Calu3 (cell line): ENCODE measurements at regions of chr10 and their contacts with region 1.

Region 1: GRCh38 chr10:30534465-30535144 is 94.9 kb downstream of the LYZL2 start:
- DNase-seq: peak; percentile 67
- H3K4me3 Mint-ChIP-seq: no peak overlapping the region
- H3K27ac Mint-ChIP-seq: no peak overlapping the region
- H3K4me1 Mint-ChIP-seq: peaks cover 28% of the 10 kb centered on the region
- H3K27me3 Mint-ChIP-seq: no peaks in the 10 kb centered on the region
- CTCF ChIP-seq: peak; percentile 85

Region 2: GRCh38 chr10:30392564-30392990 is 142.0 kb before region 1 on chr10:
- CTCF ChIA-PET with region 1: no interaction called
- intact Hi-C with region 1: loop called (anchors 2 kb)
- DNase-seq: peak; percentile 85
- H3K4me3 Mint-ChIP-seq: peak overlapping the region; percentile 34
- H3K27ac Mint-ChIP-seq: no peak overlapping the region
- H3K4me1 Mint-ChIP-seq: peaks cover 11% of the 10 kb centered on the region
- H3K27me3 Mint-ChIP-seq: no peaks in the 10 kb centered on the region
- CTCF ChIP-seq: peak; percentile 85

Region 3: GRCh38 chr10:30413996-30414576 is 120.5 kb before region 1 on chr10:
- CTCF ChIA-PET with region 1: interaction called, 3 read pairs
- intact Hi-C with region 1: loop called (anchors 1 kb)
- DNase-seq: peak; percentile 51
- H3K4me3 Mint-ChIP-seq: no peak overlapping the region
- H3K27ac Mint-ChIP-seq: no peak overlapping the region
- H3K4me1 Mint-ChIP-seq: peaks cover 16% of the 10 kb centered on the region
- H3K27me3 Mint-ChIP-seq: no peaks in the 10 kb centered on the region
- CTCF ChIP-seq: peak; percentile 71

Region 4: DNA sequence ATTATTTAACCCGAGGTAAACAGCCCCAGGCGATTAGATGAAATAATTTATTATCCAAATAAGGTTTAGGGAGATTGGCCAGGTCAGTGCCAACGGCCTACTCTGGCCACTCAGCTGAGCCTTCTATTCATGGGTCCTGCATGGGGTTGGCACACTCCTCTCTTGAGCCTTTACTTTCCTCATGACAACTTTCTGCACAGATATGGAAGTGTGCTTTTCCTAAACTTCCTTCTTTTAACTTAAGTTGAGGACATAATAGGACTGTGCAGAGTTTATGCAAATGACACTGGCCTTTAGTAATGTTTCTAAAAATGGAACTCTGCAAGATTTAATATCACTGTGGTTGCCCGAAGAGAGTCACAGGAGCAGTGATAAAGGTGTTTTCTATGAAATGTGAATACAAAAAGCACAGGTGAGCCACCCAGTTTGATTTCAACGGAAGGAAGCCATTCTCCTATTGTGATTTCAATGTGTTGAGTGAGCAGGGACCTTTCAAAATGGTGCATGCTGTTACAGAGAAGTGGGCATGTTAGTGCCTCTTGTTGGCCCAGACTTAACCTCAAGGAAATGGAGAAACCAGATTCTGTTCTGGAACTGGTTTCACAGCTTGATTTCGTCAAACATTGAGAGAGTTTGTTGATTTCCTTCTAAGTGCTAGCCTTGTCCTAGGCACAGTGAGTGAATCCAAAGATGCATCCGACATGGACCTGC is 39.3 kb after region 1 on chr10:
- CTCF ChIA-PET with region 1: no interaction called
- intact Hi-C with region 1: no loop called
- DNase-seq: no peak
- H3K4me3 Mint-ChIP-seq: no peak overlapping the region
- H3K27ac Mint-ChIP-seq: no peak overlapping the region
- H3K4me1 Mint-ChIP-seq: peaks cover 1% of the 10 kb centered on the region
- H3K27me3 Mint-ChIP-seq: no peaks in the 10 kb centered on the region
- CTCF ChIP-seq: no peak